Left lung (tissue), 14 donors: ENCODE measurements at regions of chr3 and their contacts with region 1.

Region 1: DNA sequence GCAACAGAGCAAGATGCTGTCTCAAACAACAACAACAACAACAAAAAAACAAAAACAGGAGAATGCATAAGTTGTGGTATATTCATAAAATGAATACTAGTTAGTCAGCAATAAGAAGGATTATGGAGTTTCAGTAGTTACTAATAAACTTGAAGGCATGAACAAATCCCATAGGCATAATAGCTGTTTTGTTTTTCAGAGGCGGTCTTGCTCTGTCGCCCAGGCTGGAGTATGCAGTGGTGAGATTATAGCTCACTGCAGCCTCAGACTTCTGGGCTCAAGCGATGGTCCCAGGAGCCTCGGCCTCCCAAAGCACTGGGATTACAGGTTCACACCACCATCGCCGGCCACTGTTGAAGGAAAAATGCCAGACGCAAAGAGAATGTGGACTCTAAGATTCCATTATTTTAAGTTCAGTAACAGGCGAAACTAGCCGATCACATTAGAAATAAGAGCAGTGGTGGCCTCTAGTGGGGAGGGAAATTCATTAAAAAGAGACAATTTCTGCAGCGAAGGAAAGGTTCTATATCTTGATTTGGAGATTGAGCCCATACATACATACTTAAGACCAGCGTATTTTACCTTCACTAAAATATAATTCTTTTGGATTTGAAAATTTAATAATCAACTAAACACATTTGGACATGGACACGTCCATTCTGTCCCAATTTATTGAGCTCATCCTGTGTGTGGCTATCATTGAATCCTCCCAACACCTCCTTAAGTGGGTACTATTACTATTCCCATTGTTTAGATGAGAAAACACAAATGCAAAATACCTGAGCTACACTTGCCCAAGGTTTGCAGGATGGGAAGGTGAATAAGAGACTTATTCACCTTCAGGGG is 27.4 kb upstream of the HDAC11 start:
- DNase-seq: peak in 1 of 4 donors; percentile 57
- ATAC-seq: peak; percentile 68
- H3K4me3 ChIP-seq: peak overlapping the region; percentile 47 to 60
- H3K27ac ChIP-seq: peak overlapping the region; percentile 90 to 94
- H3K4me1 ChIP-seq: peaks cover 7 to 13% of the 10 kb centered on the region in 2 donors
- H3K27me3 ChIP-seq: no peaks in the 10 kb centered on the region
- CTCF ChIP-seq: peak; percentile 47 to 56

Region 2: DNA sequence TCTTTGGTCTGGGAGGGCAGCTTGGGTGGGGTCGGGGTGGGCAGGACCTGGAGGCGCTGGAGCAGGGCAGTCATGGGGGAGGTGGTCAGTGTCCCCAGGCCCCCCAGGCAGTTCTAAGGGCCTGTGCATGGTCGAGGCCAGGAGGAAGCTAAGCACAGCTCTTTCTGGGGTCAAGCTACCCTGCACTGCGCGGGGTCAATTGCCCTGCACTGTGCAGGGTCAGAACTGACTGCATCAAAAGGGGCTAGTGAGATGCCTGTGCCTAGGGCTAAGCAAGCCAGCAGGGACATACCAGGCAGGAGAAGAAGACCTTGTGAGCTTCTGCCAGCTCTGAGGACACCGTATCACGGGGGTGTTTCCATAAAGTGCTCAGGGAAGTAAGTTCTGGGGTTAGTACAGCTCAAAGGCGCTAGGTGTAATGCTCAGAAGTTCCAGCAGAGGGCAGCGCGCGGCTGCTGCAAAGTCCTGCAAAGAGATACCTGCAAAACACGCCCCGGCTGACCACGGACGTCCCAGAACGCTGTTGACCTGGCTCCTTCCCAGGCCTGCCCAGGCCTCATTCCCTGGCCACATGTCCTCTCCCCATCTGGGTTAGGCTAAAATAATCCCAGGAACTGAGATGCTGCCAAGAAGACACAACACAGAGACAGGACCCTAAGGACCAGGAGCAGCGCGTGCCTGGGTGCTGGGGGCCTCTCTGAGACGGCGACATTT is 360.7 kb before region 1 on chr3:
- intact Hi-C with region 1: loop called in 1 of 2 experiments (anchors 5 kb)
- DNase-seq: peak; percentile 62 to 96 (median 81)
- ATAC-seq: peak; percentile 97
- H3K4me3 ChIP-seq: no peak overlapping the region
- H3K27ac ChIP-seq: no peak overlapping the region
- H3K4me1 ChIP-seq: peaks cover 2 to 7% of the 10 kb centered on the region in 2 donors
- H3K27me3 ChIP-seq: peaks cover 0 to 19% of the 10 kb centered on the region in 2 donors
- CTCF ChIP-seq: peak; percentile 95 to 96